ENCODE measurements at regions of chr9 and their contacts with region 1.

Region 1: GRCh38 chr9:132800038-132800648 is 77.9 kb downstream of the AK8 start:
- DNase-seq: peak; percentile 47
- H3K4me3 Mint-ChIP-seq: no peak overlapping the region
- H3K27ac Mint-ChIP-seq: no peak overlapping the region
- H3K4me1 Mint-ChIP-seq: peaks cover 2% of the 10 kb centered on the region
- H3K27me3 Mint-ChIP-seq: peaks cover 30% of the 10 kb centered on the region

Region 2: GRCh38 chr9:132494857-132495256 is 305.3 kb before region 1 on chr9:
- intact Hi-C with region 1: no loop called
- DNase-seq: no peak
- H3K4me3 Mint-ChIP-seq: no peak overlapping the region
- H3K27ac Mint-ChIP-seq: no peak overlapping the region
- H3K4me1 Mint-ChIP-seq: no peaks in the 10 kb centered on the region
- H3K27me3 Mint-ChIP-seq: peaks cover 20% of the 10 kb centered on the region

Region 3: DNA sequence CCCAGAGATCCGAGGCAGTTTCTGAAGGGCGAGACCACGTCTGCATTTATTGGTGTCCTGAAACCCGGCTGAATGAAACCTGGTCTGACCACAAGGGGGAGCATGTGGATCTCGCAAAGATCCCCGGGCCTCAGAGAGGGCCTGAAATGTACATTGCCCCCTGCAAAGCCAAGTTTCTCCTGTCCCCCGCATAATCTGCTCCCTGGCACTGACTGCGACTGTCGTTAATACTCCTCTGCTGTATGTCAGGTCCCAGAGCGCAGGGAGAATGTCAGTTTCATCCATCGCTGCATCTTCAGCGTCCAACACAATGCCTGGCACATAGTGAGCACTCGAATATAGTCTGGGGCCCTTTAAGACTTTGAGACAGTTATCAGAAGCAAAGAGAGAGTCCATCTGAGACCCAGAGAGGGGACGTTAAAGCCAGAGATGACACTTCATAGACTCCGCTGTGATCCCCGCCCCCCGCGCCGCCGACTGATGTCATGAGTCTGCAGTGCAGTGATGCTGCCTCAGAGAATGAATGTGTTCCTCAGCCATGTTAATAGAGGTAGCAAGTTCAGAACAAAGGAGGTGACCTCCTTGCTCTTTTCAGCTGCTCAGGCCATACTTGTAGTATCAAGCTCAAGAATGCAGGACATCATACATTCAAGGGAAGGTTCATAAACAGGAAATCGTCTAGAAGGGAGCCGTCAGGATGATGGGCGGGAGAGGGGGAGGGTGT is 292.2 kb before region 1 on chr9:
- intact Hi-C with region 1: loop called (anchors 2 kb)
- DNase-seq: peak; percentile 48
- H3K4me3 Mint-ChIP-seq: no peak overlapping the region
- H3K27ac Mint-ChIP-seq: no peak overlapping the region
- H3K4me1 Mint-ChIP-seq: peaks cover 8% of the 10 kb centered on the region
- H3K27me3 Mint-ChIP-seq: peaks cover 4% of the 10 kb centered on the region

Region 4: GRCh38 chr9:132584601-132585560 is 215.3 kb before region 1 on chr9:
- intact Hi-C with region 1: loop called (anchors 5 kb)
- DNase-seq: no peak
- H3K4me3 Mint-ChIP-seq: no peak overlapping the region
- H3K27ac Mint-ChIP-seq: no peak overlapping the region
- H3K4me1 Mint-ChIP-seq: peaks cover 8% of the 10 kb centered on the region
- H3K27me3 Mint-ChIP-seq: peaks cover 73% of the 10 kb centered on the region

Region 5: DNA sequence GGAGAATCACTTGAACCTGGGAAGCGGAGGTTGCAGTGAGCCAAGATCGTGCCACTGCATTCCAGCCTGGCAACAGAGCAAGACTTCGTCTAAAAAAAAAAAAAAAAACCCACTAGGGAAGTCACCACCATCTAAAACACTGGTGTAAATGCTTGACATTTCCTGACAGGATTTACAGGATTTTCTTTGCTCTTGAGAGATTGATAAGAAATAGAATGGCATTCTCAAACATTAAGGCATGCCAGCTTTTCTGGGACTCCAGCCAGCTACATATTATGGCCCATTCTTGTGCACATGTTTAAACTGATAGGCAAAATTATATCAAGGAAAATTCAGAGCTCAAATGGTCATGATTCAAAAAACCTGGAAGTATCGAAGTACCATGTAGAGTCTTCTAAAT is 101.2 kb before region 1 on chr9:
- intact Hi-C with region 1: loop called (anchors 5 kb)
- DNase-seq: no peak
- H3K4me3 Mint-ChIP-seq: no peak overlapping the region
- H3K27ac Mint-ChIP-seq: no peak overlapping the region
- H3K4me1 Mint-ChIP-seq: peaks cover 2% of the 10 kb centered on the region
- H3K27me3 Mint-ChIP-seq: peaks cover 7% of the 10 kb centered on the region

Region 6: DNA sequence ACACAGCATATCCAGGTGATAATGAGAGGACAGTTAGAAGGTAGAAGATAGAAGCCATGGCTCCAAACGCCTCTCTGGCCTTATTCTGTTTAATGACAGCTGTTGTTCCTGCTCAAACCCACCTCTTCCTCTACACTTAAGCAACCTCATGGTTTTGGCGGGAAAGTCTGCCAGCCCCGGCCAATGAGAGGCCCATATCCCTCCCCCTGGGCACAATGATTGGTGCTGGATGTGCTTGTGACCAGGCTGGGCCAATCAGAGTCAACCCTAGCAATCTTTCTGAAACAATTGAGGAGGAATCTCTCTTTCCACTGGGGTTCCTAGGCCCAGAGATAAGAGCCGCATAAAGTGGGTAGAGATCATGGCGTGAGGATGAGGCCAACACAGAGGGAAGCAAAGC is 173.6 kb after region 1 on chr9:
- intact Hi-C with region 1: loop called (anchors 10 kb)
- DNase-seq: no peak
- H3K4me3 Mint-ChIP-seq: no peak overlapping the region
- H3K27ac Mint-ChIP-seq: no peak overlapping the region
- H3K4me1 Mint-ChIP-seq: no peaks in the 10 kb centered on the region
- H3K27me3 Mint-ChIP-seq: peaks cover 26% of the 10 kb centered on the region